ENCODE measurements at regions of chr1 and their contacts with region 1.

Region 1: DNA sequence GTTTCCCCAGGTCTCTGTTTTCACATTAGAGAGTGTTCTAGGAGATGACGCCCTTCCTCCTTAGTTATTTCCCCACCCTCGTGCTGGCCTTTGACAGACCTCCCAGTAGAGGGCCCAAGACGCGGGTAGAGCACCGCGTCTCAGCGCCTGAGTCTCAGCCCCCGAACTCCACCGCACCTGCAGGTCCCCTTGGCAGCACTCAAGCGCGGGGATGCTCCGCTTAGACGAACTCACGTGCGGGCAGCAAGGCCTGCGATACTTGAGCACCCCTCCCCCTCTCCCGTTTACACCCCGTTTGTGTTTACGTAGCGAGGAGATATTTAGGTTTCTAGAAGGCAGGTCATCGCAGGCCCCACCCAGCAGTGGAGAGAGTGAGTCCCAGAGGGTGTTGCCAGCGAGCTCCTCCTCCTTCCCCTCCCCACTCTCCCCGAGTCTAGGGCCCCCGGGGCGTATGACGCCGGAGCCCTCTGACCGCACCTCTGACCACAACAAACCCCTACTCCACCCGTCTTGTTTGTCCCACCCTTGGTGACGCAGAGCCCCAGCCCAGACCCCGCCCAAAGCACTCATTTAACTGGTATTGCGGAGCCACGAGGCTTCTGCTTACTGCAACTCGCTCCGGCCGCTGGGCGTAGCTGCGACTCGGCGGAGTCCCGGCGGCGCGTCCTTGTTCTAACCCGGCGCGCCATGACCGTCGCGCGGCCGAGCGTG is at the start of gene CD55:
- DNase-seq: peak; percentile 98 to 99
- H3K4me3 ChIP-seq: peak within 1 kb of the TSS; percentile 67
- H3K27ac ChIP-seq: peak within 1 kb of the TSS; percentile 87
- H3K4me1 ChIP-seq: peaks cover 47% of the 10 kb centered on the region
- H3K27me3 ChIP-seq: no peaks in the 10 kb centered on the region
- CTCF ChIP-seq: no peak; the same call in 1 of the 2 replicates
- total RNA-seq, gene CD55: 45.9 and 46.4 TPM in 2 replicates

Region 2: GRCh38 chr1:207025144-207025880 is 295.9 kb before region 1 on chr1:
- CTCF ChIA-PET with region 1: no interaction called
- POLR2A ChIA-PET with region 1: interaction called, 3 read pairs
- intact Hi-C with region 1: loop called (anchors 10 kb)
- DNase-seq: peak; percentile 80 to 90
- H3K4me3 ChIP-seq: no peak overlapping the region
- H3K27ac ChIP-seq: peak overlapping the region; percentile 97
- H3K4me1 ChIP-seq: peaks cover 90% of the 10 kb centered on the region
- H3K27me3 ChIP-seq: no peaks in the 10 kb centered on the region
- CTCF ChIP-seq: no peak

Region 3: DNA sequence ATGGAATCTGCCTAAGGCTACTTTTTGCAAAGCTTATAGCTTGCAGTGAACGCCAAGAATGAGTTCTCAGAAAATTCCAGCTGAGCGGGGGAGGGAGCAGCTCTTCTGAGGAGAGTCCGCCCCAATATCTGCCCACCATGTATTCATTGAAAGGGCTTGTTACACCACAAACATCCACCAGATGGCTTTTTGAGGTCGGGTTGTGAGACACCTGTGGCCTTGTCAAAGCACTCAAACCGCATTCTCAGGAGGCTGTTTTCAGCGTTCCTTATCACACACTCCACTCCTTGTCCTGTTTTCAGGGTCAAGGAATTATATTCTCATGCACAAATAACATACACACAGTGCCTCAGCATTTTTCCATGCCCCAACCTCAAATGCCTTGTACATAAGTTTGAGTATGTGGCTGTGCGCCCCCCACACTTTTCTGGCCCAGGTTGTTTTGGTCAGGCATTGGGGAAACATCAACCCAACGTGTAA is 236.5 kb before region 1 on chr1:
- CTCF ChIA-PET with region 1: no interaction called
- POLR2A ChIA-PET with region 1: interaction called, 4 read pairs
- intact Hi-C with region 1: loop called (anchors 1 kb)
- DNase-seq: peak; percentile 55 to 59
- H3K4me3 ChIP-seq: no peak overlapping the region
- H3K27ac ChIP-seq: no peak overlapping the region
- H3K4me1 ChIP-seq: peaks cover 30% of the 10 kb centered on the region
- H3K27me3 ChIP-seq: no peaks in the 10 kb centered on the region
- CTCF ChIP-seq: peak; percentile 76

Region 4: DNA sequence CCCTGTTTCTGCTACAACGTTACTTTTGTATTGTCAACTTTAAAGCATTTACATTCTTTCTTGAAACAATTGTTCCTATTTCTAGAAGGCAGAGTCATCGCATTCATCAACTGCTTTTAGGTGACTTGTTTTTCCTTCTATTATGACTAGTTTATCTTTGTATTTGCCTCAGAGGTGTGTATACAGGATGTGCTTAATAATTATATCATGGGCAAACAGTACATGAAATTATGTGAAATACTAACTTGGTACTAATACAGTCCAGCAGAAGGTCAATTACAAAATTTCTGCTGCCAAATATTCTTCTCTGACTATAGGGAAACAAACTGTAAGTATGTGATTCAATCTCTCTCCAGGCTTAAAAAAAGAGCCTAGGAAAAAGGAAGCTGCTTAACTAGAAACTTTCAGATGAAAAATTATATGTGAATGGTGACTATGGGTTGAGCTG is 115.6 kb before region 1 on chr1:
- CTCF ChIA-PET with region 1: no interaction called
- POLR2A ChIA-PET with region 1: interaction called, 5 read pairs
- intact Hi-C with region 1: loop called (anchors 1 kb)
- DNase-seq: peak in 1 of 2 experiments; percentile 37
- H3K4me3 ChIP-seq: no peak overlapping the region
- H3K27ac ChIP-seq: peak overlapping the region; percentile 85
- H3K4me1 ChIP-seq: peaks cover 19% of the 10 kb centered on the region
- H3K27me3 ChIP-seq: no peaks in the 10 kb centered on the region
- CTCF ChIP-seq: no peak

Region 5: GRCh38 chr1:207282058-207282457 is 39.2 kb before region 1 on chr1:
- CTCF ChIA-PET with region 1: no interaction called
- POLR2A ChIA-PET with region 1: interaction called, 6 read pairs
- intact Hi-C with region 1: loop called (anchors 1 kb)
- DNase-seq: peak in 1 of 2 experiments; percentile 66
- H3K4me3 ChIP-seq: no peak overlapping the region
- H3K27ac ChIP-seq: peak overlapping the region; percentile 60
- H3K4me1 ChIP-seq: peaks cover 28% of the 10 kb centered on the region
- H3K27me3 ChIP-seq: no peaks in the 10 kb centered on the region
- CTCF ChIP-seq: no peak

Region 6: DNA sequence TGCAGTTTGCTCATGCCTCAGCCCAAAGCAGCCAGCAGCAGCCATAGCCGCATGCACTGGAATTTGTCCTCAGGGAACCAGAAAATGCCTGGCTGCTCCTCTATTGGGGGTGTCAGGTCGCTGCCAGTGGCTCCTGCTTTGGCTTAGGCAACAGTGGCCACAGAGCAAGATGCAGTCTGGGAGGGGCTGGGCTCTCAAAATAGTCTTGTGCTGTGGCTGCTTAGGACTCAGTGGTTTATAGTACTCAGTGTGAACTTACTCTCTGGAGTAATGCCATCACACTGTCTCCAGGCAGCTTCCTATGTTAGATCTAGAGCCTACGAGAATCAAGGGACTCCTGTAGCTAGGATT is 25.3 kb after region 1 on chr1:
- CTCF ChIA-PET with region 1: no interaction called
- POLR2A ChIA-PET with region 1: no interaction called
- intact Hi-C with region 1: no loop called
- DNase-seq: no peak
- H3K4me3 ChIP-seq: no peak overlapping the region
- H3K27ac ChIP-seq: no peak overlapping the region
- H3K4me1 ChIP-seq: no peaks in the 10 kb centered on the region
- H3K27me3 ChIP-seq: no peaks in the 10 kb centered on the region
- CTCF ChIP-seq: no peak

Region 7: GRCh38 chr1:207393610-207394009 is 72.4 kb after region 1 on chr1:
- CTCF ChIA-PET with region 1: no interaction called
- POLR2A ChIA-PET with region 1: interaction called, 6 read pairs
- intact Hi-C with region 1: loop called (anchors 1 kb)
- DNase-seq: peak; percentile 63 to 97
- H3K4me3 ChIP-seq: peak overlapping the region; percentile 30; the same call in 1 of the 2 replicates
- H3K27ac ChIP-seq: peak overlapping the region; percentile 73
- H3K4me1 ChIP-seq: peaks cover 29% of the 10 kb centered on the region
- H3K27me3 ChIP-seq: no peaks in the 10 kb centered on the region
- CTCF ChIP-seq: no peak